CD8-positive, alpha-beta T cell (primary cell): ENCODE measurements at regions of chr6 and their contacts with region 1.

Region 1: DNA sequence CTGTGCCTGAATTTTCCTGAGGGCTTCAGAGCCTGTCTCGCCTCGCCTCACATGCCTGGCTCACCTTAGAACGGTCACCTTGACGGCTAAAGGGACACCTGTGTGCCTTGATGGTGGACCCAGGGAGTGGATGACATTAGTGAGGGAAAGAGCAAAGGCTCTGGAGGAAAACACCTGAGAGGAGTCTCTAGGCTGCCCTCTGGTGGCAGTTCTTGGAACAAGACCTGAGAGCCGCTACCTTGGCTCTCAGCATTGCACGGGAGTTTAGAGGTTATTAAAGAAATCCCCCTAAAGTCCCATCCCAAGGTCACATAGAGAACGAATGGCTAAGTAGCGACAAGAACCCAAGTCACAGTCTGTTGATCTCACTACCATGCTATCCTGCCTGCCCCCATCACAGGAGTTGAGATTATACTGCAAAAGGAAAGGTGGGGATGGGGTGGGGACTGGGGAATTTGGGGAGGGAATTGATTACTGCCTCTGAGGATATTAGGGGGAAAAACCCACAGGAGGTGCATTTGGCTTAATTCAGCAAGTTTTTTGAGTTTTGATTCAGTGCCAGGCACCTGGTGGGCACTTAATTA is 7.9 kb upstream of the CDSN start:
- DNase-seq: peak; percentile 50 to 87 (median 74)
- ATAC-seq: peak; percentile 90
- H3K4me3 ChIP-seq: no peak overlapping the region
- H3K4me3 Mint-ChIP-seq: no peak overlapping the region
- H3K27ac ChIP-seq: no peak overlapping the region
- H3K27ac Mint-ChIP-seq: no peak overlapping the region
- H3K4me1 ChIP-seq: no peaks in the 10 kb centered on the region
- H3K4me1 Mint-ChIP-seq: peaks cover 8% of the 10 kb centered on the region
- H3K27me3 ChIP-seq: no peaks in the 10 kb centered on the region
- H3K27me3 Mint-ChIP-seq: peaks cover 6% of the 10 kb centered on the region
- CTCF ChIP-seq: peak; percentile 79

Region 2: DNA sequence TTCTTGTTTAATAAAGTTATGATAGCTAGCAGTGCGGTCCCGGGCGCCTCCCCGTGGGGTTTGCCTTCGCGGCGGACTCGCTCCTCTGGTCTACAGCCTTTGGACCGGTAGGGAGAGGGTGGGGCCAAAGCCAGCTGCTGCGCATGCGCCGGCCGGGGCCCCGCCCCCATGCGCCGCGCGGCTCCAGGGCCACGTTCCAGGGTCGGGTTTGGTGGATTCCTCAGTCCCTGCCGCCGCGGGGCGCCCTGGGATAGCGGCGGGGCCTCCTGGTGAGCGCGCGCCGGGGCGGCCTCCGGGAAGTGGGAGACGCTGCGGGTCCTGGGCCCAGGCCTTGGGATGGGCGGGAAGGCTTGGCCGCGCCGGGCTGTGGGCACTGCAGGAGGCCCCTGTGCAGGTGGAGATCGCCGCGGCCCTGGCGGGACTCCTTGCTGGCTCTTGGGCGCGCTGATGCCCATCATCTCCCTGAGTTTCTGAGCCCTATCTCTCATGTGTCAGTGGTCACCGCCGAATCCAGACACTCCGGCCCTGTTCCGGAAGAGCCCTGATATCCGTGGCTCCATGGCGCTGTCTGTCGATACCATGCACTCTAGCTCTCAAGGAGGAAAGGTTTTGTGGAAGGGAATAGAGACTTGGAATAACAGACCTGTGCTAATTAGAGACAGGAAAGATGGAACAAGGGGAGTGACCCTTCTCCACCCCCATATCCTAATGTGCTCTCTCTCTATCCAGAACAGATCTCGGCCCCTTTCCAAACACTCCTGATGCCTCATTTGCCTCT is 213.9 kb before region 1 on chr6 and contains the start of gene VARS2:
- CTCF ChIA-PET with region 1: no interaction called
- POLR2A ChIA-PET with region 1: no interaction called
- intact Hi-C with region 1: loop called (anchors 1 to 2 kb)
- DNase-seq: peak; percentile 66 to 92 (median 82)
- ATAC-seq: peak; percentile 96
- H3K4me3 ChIP-seq: peak within 1 kb of the TSS; percentile 61 to 92
- H3K4me3 Mint-ChIP-seq: peak within 1 kb of the TSS; percentile 93
- H3K27ac ChIP-seq: peak within 1 kb of the TSS; percentile 48 to 65
- H3K27ac Mint-ChIP-seq: peak within 1 kb of the TSS; percentile 88
- H3K4me1 ChIP-seq: peaks cover 15% of the 10 kb centered on the region
- H3K4me1 Mint-ChIP-seq: peaks cover 29% of the 10 kb centered on the region
- H3K27me3 ChIP-seq: no peaks in the 10 kb centered on the region
- H3K27me3 Mint-ChIP-seq: no peaks in the 10 kb centered on the region
- CTCF ChIP-seq: no peak
- total RNA-seq, gene VARS2: 19.5 to 20.6 TPM

Region 3: DNA sequence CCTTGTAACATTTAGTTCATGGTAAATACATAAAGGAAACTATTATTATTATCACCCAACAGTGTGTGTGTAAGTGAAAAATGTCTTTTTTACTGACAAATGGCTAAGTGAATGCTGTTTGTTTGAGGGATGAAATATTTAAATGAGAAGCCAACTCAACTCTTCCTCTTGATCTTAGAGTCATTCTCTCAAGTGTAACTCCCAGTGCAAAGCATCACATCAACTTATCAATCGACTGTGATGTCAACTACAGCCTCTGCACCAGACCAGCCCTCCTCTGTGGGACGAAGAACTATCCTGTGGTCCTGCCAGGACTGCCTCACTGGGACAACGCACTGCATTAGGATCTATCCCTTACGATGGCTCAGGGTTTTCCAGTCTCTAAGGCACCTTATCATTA is 21.1 kb before region 1 on chr6:
- CTCF ChIA-PET with region 1: interaction called, 7 read pairs
- POLR2A ChIA-PET with region 1: no interaction called
- intact Hi-C with region 1: loop called in 1 of 2 experiments (anchors 1 kb)
- DNase-seq: no peak
- ATAC-seq: no peak
- H3K4me3 ChIP-seq: no peak overlapping the region
- H3K4me3 Mint-ChIP-seq: no peak overlapping the region
- H3K27ac ChIP-seq: no peak overlapping the region
- H3K27ac Mint-ChIP-seq: no peak overlapping the region
- H3K4me1 ChIP-seq: no peaks in the 10 kb centered on the region
- H3K4me1 Mint-ChIP-seq: peaks cover 3% of the 10 kb centered on the region
- H3K27me3 ChIP-seq: no peaks in the 10 kb centered on the region
- H3K27me3 Mint-ChIP-seq: no peaks in the 10 kb centered on the region
- CTCF ChIP-seq: no peak

Region 4: DNA sequence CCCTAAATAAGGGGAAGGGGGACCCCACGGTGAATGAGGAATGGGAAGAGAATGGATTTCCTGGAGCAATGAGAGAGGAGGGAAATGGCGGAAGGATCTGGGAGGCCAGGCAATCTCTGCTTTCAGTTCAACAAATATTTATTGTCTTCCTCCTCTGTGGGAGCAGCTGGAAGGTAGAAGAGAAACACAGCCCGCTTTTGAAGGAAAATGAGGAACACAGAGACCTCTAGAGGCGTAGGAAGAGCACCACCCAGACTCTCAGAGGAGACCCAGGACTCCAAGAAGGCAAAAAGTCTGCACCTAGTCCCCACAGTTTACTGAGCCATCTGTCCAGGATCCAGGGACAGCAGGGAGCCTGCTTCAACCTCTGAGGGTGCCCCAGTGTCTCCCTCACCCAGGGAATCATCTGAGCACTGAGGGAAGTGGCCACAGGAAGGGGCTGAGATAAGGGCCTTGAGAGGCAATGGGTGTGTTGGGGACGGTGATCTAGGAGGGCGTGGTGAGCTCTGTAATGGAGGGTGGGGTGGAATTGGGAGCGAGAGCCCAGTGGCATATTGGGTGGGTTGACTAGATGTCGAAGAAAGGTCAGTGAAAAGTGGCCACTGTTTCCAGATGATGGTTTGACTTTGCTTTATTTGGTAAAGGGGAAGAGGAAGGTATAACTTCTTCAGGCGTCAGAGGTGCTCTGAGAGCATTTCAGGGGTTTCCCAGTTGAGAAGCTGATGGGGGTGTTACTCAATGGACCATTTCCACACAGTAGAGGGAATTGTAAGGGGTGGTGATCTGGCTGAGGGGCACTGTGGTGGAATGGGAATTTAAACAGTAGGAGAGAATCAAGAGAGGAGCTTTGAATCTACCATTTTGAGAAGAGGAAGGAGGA is 13.0 kb before region 1 on chr6:
- CTCF ChIA-PET with region 1: interaction called, 10 read pairs
- POLR2A ChIA-PET with region 1: interaction called, 3 read pairs
- intact Hi-C with region 1: no loop called
- DNase-seq: peak in 1 of 9 experiments; percentile 46
- ATAC-seq: peak; percentile 29
- H3K4me3 ChIP-seq: no peak overlapping the region
- H3K4me3 Mint-ChIP-seq: no peak overlapping the region
- H3K27ac ChIP-seq: no peak overlapping the region
- H3K27ac Mint-ChIP-seq: no peak overlapping the region
- H3K4me1 ChIP-seq: no peaks in the 10 kb centered on the region
- H3K4me1 Mint-ChIP-seq: peaks cover 3% of the 10 kb centered on the region
- H3K27me3 ChIP-seq: no peaks in the 10 kb centered on the region
- H3K27me3 Mint-ChIP-seq: peaks cover 11% of the 10 kb centered on the region
- CTCF ChIP-seq: no peak